ENCODE measurements at regions of chr3 and their contacts with region 1.

Region 1: DNA sequence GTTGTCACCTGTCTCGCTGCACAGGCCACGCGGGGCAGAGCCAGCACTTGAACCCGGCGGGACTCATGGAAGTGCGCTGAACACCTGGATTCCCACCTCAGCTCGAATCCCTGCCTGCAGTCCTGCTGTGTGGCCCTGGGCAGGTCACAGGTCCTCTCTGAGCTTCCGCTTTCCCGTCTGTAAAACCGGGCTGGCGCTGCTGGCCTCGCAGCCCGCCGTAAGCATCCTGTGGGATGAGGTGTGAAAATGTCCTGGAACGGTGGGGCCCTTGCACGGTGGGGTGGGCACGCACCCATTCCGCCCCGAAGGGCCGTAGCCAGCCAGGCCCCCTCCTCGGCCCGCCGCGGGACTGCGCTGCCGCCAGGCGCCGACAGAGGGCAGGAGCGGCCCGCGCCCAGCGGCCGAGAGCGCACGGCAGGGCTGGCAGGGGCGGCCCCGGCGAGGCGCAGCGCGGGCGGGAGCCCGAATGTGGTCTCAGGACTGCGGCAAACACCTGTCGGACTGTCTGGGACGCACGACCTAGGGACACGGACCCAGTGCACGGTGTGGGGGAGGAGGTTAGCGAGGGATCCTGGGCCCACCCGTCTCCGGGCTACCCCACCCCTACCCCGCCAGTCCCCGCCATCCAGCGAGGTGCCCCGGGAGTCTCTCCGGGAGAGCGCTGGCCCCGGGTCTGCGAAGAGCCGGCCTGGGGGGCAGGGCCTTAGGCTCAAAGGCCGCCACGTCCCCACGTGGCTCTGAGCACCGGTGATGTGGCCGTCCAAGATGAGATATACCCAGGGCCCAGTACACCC is 40.4 kb downstream of the DNAJB8 start:
- DNase-seq: no peak
- H3K4me3 ChIP-seq: peak overlapping the region; percentile 27
- H3K27me3 ChIP-seq: 0 out of 2 replicates have a peak, but pooled peaks cover 2% of the 10 kb centered on the region
- CTCF ChIP-seq: peak; percentile 48

Region 2: DNA sequence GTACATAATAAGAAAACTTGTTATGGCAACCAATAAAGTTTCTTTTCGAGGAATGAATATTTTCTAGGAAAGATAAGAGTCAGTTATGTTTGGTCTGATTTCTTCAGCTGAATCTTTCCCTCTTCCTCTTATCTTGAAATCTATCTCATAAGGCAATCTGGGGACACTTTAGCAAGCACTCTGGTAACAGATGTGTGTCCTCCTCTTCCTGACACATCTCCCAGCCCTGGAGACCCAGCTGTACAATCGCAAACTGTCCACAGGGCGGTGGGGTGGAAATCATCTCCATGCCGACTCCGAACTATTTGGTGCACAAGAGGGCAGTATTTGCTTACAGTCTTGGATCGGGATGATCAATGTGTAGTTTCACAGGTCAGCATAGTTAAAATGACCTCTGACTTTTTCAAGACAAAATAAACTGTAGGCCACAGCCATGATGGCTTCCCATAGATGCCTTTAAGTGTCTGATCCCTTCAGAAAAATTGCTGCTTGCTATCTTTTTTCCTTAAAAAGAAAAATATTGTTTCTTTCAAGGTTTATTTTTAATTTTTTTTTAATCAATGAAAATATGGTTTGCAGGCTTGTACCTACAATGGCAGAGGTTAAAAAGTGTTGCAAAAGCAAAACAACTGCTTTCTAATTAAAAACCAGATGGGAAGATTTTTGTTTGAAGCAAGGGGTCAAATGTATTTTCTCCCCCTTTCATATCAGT is 255.4 kb before region 1 on chr3:
- CTCF ChIA-PET with region 1: interaction called, 15 read pairs
- POLR2A ChIA-PET with region 1: no interaction called
- DNase-seq: peak; percentile 39
- H3K4me3 ChIP-seq: no peak overlapping the region
- H3K27me3 ChIP-seq: no peaks in the 10 kb centered on the region
- CTCF ChIP-seq: peak; percentile 91

Region 3: GRCh38 chr3:128438488-128439072 is 12.3 kb after region 1 on chr3:
- CTCF ChIA-PET with region 1: interaction called, 23 read pairs
- POLR2A ChIA-PET with region 1: no interaction called
- DNase-seq: no peak
- H3K4me3 ChIP-seq: no peak overlapping the region
- H3K27me3 ChIP-seq: peaks cover 4% of the 10 kb centered on the region
- CTCF ChIP-seq: peak; percentile 33

Region 4: DNA sequence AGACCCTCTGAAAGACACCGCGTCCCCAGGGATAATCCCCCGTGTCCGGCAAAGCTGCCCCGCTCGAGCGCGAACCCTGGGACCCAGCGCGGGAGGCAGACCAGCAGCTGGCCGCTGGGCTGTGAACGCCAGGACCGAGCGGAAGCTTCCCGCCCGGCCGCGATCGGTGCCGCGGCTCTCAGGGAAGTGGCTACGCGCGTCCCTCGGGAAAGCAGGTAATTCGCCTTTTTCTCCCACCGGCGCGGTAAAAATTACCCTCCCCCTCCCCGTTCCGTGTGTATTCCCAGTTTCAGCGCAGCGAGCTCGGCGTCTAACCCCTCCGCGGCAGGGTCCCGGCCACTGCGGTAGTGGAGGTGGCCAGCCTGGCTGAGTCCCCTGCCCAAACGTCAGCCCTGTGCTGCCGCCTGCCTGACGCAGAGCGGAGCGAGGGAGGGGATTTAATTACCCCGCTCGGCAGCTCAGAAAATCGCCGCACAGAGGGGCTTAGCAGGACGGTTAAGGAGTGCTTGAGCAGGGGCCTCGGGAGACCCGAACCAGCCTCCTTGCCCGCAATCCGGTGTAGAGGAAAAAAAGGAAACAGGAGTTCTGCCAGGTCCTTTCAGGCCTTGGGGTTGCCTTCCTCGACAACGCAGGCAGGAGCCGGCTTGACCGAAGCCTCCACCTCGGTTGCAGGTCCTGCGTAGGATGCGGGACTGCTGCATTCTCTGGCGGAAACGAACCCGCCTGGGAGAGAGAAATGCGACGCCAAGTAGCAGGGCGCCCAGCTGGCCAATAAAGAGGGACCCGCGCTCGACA is 63.7 kb after region 1 on chr3:
- CTCF ChIA-PET with region 1: interaction called, 60 read pairs
- POLR2A ChIA-PET with region 1: no interaction called
- DNase-seq: no peak
- H3K4me3 ChIP-seq: peak overlapping the region; percentile 91
- H3K27me3 ChIP-seq: no peaks in the 10 kb centered on the region; the same call in 1 of the 2 replicates
- CTCF ChIP-seq: 0 out of 2 replicates have a peak, but pooled peaks have one; percentile 22

Region 5: GRCh38 chr3:128497387-128498126 is 71.2 kb after region 1 on chr3:
- CTCF ChIA-PET with region 1: interaction called, 60 read pairs
- POLR2A ChIA-PET with region 1: no interaction called
- DNase-seq: no peak
- H3K4me3 ChIP-seq: peak overlapping the region; percentile 47
- H3K27me3 ChIP-seq: no peaks in the 10 kb centered on the region; the same call in 1 of the 2 replicates
- CTCF ChIP-seq: peak; percentile 68

Region 6: GRCh38 chr3:128584412-128585020 is 158.2 kb after region 1 on chr3:
- CTCF ChIA-PET with region 1: interaction called, 42 read pairs
- POLR2A ChIA-PET with region 1: no interaction called
- DNase-seq: no peak
- H3K4me3 ChIP-seq: no peak overlapping the region
- H3K27me3 ChIP-seq: peaks cover 2% of the 10 kb centered on the region; the same call in 1 of the 2 replicates
- CTCF ChIP-seq: peak; percentile 85

Region 7: GRCh38 chr3:128725932-128726690 is 299.8 kb after region 1 on chr3 and contains the start of gene RAB7A:
- CTCF ChIA-PET with region 1: no interaction called
- POLR2A ChIA-PET with region 1: no interaction called
- DNase-seq: peak; percentile 93
- H3K4me3 ChIP-seq: peak within 1 kb of the TSS; percentile 100
- H3K27me3 ChIP-seq: no peaks in the 10 kb centered on the region
- CTCF ChIP-seq: no peak
- polyA plus RNA-seq, gene RAB7A: 202 and 228 TPM in 2 replicates

Measured in BJ (cell line).